ENCODE measurements at regions of chr7 and their contacts with region 1.

Region 1: GRCh38 chr7:46603780-46604179 is 682.7 kb upstream of the IGFBP3 start:
- DNase-seq: peak; percentile 79 to 96 (median 91)
- ATAC-seq: peak; percentile 96 to 97 (median 96)
- H3K4me3 ChIP-seq: peak overlapping the region in 1 of 12 donors; percentile 14
- H3K27ac ChIP-seq: peak overlapping the region; percentile 61 to 89 (median 82)
- H3K4me1 ChIP-seq: peaks cover 3 to 38% (median 24%) of the 10 kb centered on the region in 12 donors
- H3K27me3 ChIP-seq: no peaks in the 10 kb centered on the region
- CTCF ChIP-seq: no peak
- POLR2A ChIP-seq: no peak

Region 2: GRCh38 chr7:46752881-46753366 is 149.1 kb after region 1 on chr7:
- intact Hi-C with region 1: loop called in 1 of 10 experiments (anchors 5 kb)
- DNase-seq: no peak
- ATAC-seq: peak in 1 of 4 donors; percentile 54
- H3K4me3 ChIP-seq: no peak overlapping the region
- H3K27ac ChIP-seq: no peak overlapping the region
- H3K4me1 ChIP-seq: peaks cover 0 to 18% (median 0%) of the 10 kb centered on the region in 12 donors
- H3K27me3 ChIP-seq: no peaks in the 10 kb centered on the region
- CTCF ChIP-seq: no peak
- POLR2A ChIP-seq: no peak

Region 3: DNA sequence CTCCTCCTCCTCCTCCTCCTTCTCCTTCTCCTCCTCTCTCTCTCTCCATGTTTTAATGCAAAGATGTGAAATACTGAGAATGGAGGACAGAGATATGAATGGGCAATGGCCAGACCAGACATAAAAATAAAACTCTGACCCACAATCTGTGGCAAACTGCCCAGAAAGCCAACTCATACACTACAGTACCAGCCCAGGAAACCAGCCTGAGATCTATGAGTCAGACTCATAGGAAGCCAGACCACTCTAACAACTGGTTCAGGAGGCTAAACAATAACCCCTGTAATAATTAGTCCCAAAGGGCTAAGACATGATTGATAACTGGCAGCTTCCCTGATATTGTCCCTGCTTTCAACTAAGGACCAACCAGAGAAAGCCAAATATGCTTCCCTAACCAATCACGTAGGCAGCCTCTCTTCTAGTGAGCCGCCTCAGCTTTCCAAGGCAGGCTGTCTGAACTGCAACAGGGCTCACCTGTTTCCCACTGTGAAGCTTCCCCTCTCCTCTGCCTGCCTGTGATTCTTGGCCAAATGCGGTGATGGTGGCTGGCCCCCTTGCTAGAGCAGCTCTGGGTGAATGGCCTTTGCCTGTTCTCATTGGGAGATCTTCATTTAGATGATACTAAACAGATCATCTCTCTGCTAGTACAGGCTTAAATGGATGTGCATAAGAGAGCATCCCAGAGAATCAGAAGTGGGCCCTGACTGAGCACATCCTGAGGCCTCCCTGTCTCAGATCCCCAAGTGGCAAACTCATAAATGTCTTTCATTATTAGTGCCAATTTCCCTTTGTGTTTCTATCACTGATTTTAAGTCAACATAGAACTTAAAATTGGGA is 160.5 kb after region 1 on chr7:
- intact Hi-C with region 1: loop called in 1 of 10 experiments (anchors 10 kb)
- DNase-seq: peak in 4 of 5 donors; percentile 69 to 72 (median 70)
- ATAC-seq: peak; percentile 87 to 97 (median 96)
- H3K4me3 ChIP-seq: no peak overlapping the region
- H3K27ac ChIP-seq: peak overlapping the region in 2 of 12 donors; percentile 3 to 52
- H3K4me1 ChIP-seq: peaks cover 0 to 16% (median 2%) of the 10 kb centered on the region in 12 donors
- H3K27me3 ChIP-seq: no peaks in the 10 kb centered on the region
- CTCF ChIP-seq: no peak
- POLR2A ChIP-seq: no peak

Region 4: DNA sequence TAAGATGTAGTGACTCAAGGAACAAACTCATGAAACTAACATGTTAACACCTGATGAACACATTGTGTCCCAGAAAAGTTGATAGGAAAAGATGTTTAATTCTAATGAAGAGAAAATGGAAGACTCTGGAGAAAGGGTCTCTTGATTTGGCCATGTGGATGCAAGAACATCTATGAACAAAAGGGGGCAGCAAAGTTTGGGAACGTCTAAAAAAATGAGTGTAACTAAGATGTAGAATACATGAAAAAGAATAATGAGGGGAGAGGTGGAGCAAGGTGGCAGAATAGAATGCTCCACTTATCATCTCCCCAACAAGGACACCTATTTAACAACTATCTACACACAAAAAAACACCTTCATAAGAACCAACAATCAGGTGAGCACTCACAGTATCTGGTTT is 173.0 kb after region 1 on chr7:
- intact Hi-C with region 1: loop called in 1 of 10 experiments (anchors 5 kb)
- DNase-seq: no peak
- ATAC-seq: no peak
- H3K4me3 ChIP-seq: no peak overlapping the region
- H3K27ac ChIP-seq: no peak overlapping the region
- H3K4me1 ChIP-seq: peaks cover 0 to 31% (median 15%) of the 10 kb centered on the region in 12 donors
- H3K27me3 ChIP-seq: no peaks in the 10 kb centered on the region
- CTCF ChIP-seq: peak in 11 of 12 donors; percentile 27 to 63 (median 52)
- POLR2A ChIP-seq: no peak

Region 5: DNA sequence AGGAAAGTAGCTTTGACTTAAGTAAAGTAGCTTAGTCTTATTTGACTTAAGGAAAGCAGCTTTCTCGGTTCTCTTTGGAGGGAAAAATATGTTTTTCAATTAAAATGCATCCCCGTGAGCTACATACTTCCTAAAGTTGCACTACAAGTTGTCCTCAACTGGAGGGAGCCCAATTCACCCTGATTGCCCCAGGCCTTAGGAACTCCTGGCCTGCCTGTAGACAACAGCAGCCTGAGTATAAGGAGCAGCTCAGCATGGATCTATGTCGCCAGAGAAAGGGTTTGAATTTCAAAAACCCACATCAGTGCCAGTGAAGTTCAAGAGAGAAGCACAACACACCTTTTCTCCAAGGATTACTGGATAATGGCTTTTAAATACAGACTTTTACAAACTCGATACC is 206.1 kb after region 1 on chr7:
- intact Hi-C with region 1: loop called in 1 of 10 experiments (anchors 10 kb)
- DNase-seq: peak in 1 of 5 donors; percentile 29
- ATAC-seq: no peak
- H3K4me3 ChIP-seq: no peak overlapping the region
- H3K27ac ChIP-seq: no peak overlapping the region
- H3K4me1 ChIP-seq: peaks cover 0 to 27% (median 12%) of the 10 kb centered on the region in 12 donors
- H3K27me3 ChIP-seq: no peaks in the 10 kb centered on the region
- CTCF ChIP-seq: no peak
- POLR2A ChIP-seq: no peak

Region 6: GRCh38 chr7:46932676-46933424 is 329.1 kb after region 1 on chr7:
- intact Hi-C with region 1: loop called in 1 of 10 experiments (anchors 10 kb)
- DNase-seq: peak in 3 of 5 donors; percentile 26 to 59 (median 37)
- ATAC-seq: peak; percentile 59 to 85 (median 73)
- H3K4me3 ChIP-seq: no peak overlapping the region
- H3K27ac ChIP-seq: peak overlapping the region in 10 of 12 donors; percentile 8 to 71 (median 37)
- H3K4me1 ChIP-seq: peaks cover 0 to 36% (median 20%) of the 10 kb centered on the region in 12 donors
- H3K27me3 ChIP-seq: no peaks in the 10 kb centered on the region
- CTCF ChIP-seq: peak in 6 of 12 donors; percentile 10 to 49 (median 22)
- POLR2A ChIP-seq: no peak

Region 7: GRCh38 chr7:47039904-47040303 is 436.1 kb after region 1 on chr7:
- intact Hi-C with region 1: loop called in 1 of 10 experiments (anchors 10 kb)
- DNase-seq: peak in 3 of 5 donors; percentile 35 to 63 (median 59)
- ATAC-seq: peak; percentile 79 to 88 (median 80)
- H3K4me3 ChIP-seq: no peak overlapping the region
- H3K27ac ChIP-seq: peak overlapping the region; percentile 50 to 85 (median 79)
- H3K4me1 ChIP-seq: peaks cover 13 to 54% (median 38%) of the 10 kb centered on the region in 12 donors
- H3K27me3 ChIP-seq: no peaks in the 10 kb centered on the region
- CTCF ChIP-seq: no peak
- POLR2A ChIP-seq: no peak